ENCODE measurements at regions of chr9 and their contacts with region 1.

Region 1: GRCh38 chr9:129495534-129496325 is 125.2 kb downstream of the C9orf50 start:
- DNase-seq: peak; percentile 96 to 98 (median 98)
- ATAC-seq: peak; percentile 70 to 84 (median 76)
- H3K4me3 ChIP-seq: peak overlapping the region; percentile 8 to 69 (median 53)
- H3K27ac ChIP-seq: peak overlapping the region; percentile 95 to 100 (median 98)
- H3K4me1 ChIP-seq: peaks cover 38 to 40% (median 39%) of the 10 kb centered on the region in 3 donors
- H3K27me3 ChIP-seq: no peaks in the 10 kb centered on the region
- CTCF ChIP-seq: no peak

Region 2: GRCh38 chr9:129561594-129562281 is 66.0 kb after region 1 on chr9:
- intact Hi-C with region 1: loop called in 1 of 3 experiments (anchors 5 kb)
- DNase-seq: peak in 2 of 6 donors; percentile 34 to 55
- ATAC-seq: peak in 2 of 4 donors; percentile 43 to 53
- H3K4me3 ChIP-seq: no peak overlapping the region
- H3K27ac ChIP-seq: no peak overlapping the region
- H3K4me1 ChIP-seq: peaks cover 0 to 6% (median 6%) of the 10 kb centered on the region in 3 donors
- H3K27me3 ChIP-seq: no peaks in the 10 kb centered on the region
- CTCF ChIP-seq: no peak

Region 3: DNA sequence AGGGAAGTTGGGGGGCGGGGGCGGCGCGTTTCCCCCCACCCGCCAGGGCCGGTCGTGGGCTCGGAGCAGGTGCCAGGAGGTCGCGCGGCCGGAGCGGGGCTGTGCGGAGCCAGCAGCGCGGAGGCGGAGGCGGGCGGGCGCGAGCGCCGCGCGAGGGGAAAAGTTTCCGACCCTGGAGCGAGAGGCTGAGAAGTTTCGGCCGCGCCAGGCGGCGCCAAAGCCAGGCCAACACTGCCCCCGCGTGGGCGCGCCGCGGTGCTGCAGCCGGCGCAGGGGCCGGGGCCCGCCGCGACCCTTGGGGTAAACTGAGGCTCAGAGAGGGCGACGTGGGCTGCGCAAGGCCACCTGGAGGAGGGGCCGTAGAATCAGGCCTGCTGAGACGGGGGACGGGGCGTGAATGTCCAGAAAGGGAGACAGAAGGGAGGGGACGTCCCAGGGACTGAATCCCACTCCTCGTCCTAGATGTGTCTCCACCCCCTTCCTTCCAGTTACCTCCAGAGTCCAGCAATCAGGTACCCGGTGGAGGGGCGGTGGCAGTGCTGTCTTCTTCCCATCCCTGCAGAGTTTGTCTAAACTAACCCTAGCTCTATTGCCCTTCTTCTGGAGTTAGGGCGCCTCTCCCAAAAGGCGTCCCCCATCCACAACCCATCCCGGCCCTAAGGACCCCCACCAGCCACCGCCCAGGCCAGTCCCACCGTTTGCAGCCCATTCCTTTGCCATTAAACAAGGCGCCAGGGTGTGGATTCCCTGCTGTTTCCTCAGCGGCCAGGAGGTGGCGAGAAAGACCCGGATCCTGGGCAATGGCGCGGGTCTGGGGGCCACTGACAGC is 115.0 kb after region 1 on chr9:
- intact Hi-C with region 1: loop called in 1 of 3 experiments (anchors 10 kb)
- DNase-seq: peak; percentile 71 to 91 (median 84)
- ATAC-seq: peak; percentile 75 to 77 (median 76)
- H3K4me3 ChIP-seq: peak overlapping the region; percentile 11 to 71 (median 44)
- H3K27ac ChIP-seq: peak overlapping the region in 3 of 4 donors; percentile 52 to 85 (median 81)
- H3K4me1 ChIP-seq: peaks cover 4 to 8% (median 4%) of the 10 kb centered on the region in 3 donors
- H3K27me3 ChIP-seq: no peaks in the 10 kb centered on the region
- CTCF ChIP-seq: peak; percentile 92 to 96 (median 94)

Region 4: GRCh38 chr9:129910628-129911567 is 415.2 kb after region 1 on chr9:
- intact Hi-C with region 1: no loop called
- DNase-seq: no peak
- ATAC-seq: peak in 2 of 4 donors; percentile 50 to 81
- H3K4me3 ChIP-seq: no peak overlapping the region
- H3K27ac ChIP-seq: no peak overlapping the region
- H3K4me1 ChIP-seq: no peaks in the 10 kb centered on the region
- H3K27me3 ChIP-seq: no peaks in the 10 kb centered on the region
- CTCF ChIP-seq: no peak

Measured in pancreas (tissue), 10 donors.